Naive thymus-derived CD4-positive, alpha-beta T cell (primary cell): ENCODE measurements at regions of chr3 and their contacts with region 1.

Region 1: DNA sequence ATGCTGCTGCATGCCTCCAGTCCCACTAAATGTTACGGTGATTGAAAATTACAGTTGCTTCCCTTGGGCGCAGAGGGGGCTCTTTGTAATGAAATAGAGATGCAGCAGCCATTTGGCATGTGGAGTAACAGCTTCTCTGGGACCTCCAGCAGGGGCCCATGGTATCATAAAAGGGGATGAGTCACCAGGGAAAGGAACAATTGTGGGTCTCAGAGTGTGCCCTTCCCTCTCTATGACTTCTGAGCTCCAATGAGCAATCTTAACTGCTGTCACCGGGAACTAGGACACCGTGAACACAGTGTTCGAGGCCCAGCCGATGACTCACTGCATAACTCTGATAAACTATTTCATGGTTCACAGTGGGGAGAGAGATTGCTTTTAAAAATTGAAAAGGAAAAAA is 164.8 kb upstream of the NUDT16 start:
- DNase-seq: no peak
- ATAC-seq: no peak
- H3K4me3 ChIP-seq: no peak overlapping the region
- H3K4me3 Mint-ChIP-seq: no peak overlapping the region
- H3K27ac ChIP-seq: no peak overlapping the region
- H3K27ac Mint-ChIP-seq: no peak overlapping the region
- H3K4me1 ChIP-seq: no peaks in the 10 kb centered on the region
- H3K4me1 Mint-ChIP-seq: no peaks in the 10 kb centered on the region
- H3K27me3 ChIP-seq: no peaks in the 10 kb centered on the region
- H3K27me3 Mint-ChIP-seq: peaks cover 0 to 3% (median 0%) of the 10 kb centered on the region in 5 donors

Region 2: DNA sequence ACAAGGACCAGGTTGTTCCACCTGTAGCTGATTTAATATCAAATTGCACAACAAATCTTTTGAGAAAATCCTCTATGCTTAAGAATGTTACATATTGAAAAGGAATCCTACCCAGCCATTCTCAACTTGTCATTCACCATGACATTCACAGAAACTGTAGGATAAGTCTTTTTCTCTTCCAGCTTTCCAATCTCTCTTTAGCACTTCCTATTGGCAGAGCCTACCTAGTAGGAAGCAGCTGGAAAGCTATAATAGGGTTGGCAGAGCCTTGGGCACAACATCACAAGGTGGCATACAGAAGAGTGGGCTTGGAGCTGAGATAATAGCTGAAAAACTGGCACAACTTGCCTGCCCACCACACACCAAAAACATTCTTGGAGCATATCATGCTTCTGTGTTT is 97.5 kb after region 1 on chr3:
- CTCF ChIA-PET with region 1: no interaction called
- POLR2A ChIA-PET with region 1: no interaction called
- intact Hi-C with region 1: loop called in 1 of 2 experiments (anchors 10 kb)
- DNase-seq: no peak
- ATAC-seq: no peak
- H3K4me3 ChIP-seq: no peak overlapping the region
- H3K4me3 Mint-ChIP-seq: no peak overlapping the region
- H3K27ac ChIP-seq: no peak overlapping the region
- H3K27ac Mint-ChIP-seq: no peak overlapping the region
- H3K4me1 ChIP-seq: no peaks in the 10 kb centered on the region
- H3K4me1 Mint-ChIP-seq: no peaks in the 10 kb centered on the region
- H3K27me3 ChIP-seq: no peaks in the 10 kb centered on the region
- H3K27me3 Mint-ChIP-seq: peaks cover 7 to 21% (median 15%) of the 10 kb centered on the region in 5 donors